Activated CD8-positive, alpha-beta memory T cell treated with anti-CD3 and anti-CD28 coated beads, Interleukin-2, amount 10 ng/mL, durations not matched to agents 7 days and 5 days (primary cell): ENCODE measurements at regions of chr2 and their contacts with region 1.

Region 1: DNA sequence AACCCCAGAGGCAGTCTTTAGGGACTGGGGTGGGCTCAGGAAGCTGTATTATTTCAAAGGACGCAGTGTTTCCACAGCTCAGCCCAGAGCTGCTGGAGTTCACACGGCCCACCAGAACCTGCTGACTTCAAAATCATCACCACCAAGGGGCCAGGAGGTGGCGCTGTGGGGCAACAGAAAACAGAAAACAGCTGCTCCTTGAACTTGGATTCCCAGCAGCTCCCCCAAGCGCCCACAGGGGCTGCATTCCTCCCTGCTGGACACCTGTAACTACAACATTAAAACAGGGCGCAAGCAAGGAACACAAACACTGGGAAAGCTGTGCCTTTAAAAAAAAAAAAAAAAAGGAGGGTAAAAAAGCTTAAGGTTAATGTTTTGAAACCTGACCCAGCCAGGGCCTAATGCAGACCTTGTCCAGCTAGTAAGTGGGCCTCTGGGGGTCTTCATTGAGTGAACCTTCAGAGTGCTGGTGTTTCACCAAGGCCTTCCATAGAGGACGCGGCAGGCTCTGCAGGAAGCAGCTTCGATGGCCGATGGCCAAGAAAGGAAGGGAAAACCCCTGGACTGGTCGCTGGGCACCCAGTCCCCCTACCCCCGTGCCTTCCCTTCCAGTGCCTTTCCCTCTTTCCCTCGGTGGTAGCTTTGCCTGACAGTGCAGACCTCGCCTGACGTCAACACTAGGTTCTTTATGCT is 25.9 kb downstream of the MLPH start:
- DNase-seq: peak; percentile 81
- ATAC-seq: peak; percentile 70
- H3K4me3 Mint-ChIP-seq: no peak overlapping the region
- H3K27ac Mint-ChIP-seq: no peak overlapping the region
- H3K4me1 Mint-ChIP-seq: no peaks in the 10 kb centered on the region
- H3K27me3 Mint-ChIP-seq: peaks cover 9% of the 10 kb centered on the region

Region 2: GRCh38 chr2:237421542-237422116 is 91.3 kb before region 1 on chr2:
- CTCF ChIA-PET with region 1: interaction called, 10 read pairs
- DNase-seq: peak; percentile 80
- ATAC-seq: peak; percentile 98
- H3K4me3 Mint-ChIP-seq: no peak overlapping the region
- H3K27ac Mint-ChIP-seq: no peak overlapping the region
- H3K4me1 Mint-ChIP-seq: peaks cover 5% of the 10 kb centered on the region
- H3K27me3 Mint-ChIP-seq: peaks cover 5% of the 10 kb centered on the region

Region 3: GRCh38 chr2:237558906-237559641 is 46.2 kb after region 1 on chr2:
- CTCF ChIA-PET with region 1: interaction called, 10 read pairs
- DNase-seq: no peak
- ATAC-seq: no peak
- H3K4me3 Mint-ChIP-seq: no peak overlapping the region
- H3K27ac Mint-ChIP-seq: no peak overlapping the region
- H3K4me1 Mint-ChIP-seq: peaks cover 13% of the 10 kb centered on the region
- H3K27me3 Mint-ChIP-seq: peaks cover 37% of the 10 kb centered on the region

Region 4: GRCh38 chr2:237581751-237582746 is 69.1 kb after region 1 on chr2:
- CTCF ChIA-PET with region 1: interaction called, 10 read pairs
- DNase-seq: peak; percentile 80
- ATAC-seq: peak; percentile 89
- H3K4me3 Mint-ChIP-seq: no peak overlapping the region
- H3K27ac Mint-ChIP-seq: peak overlapping the region; percentile 59
- H3K4me1 Mint-ChIP-seq: peaks cover 4% of the 10 kb centered on the region
- H3K27me3 Mint-ChIP-seq: peaks cover 5% of the 10 kb centered on the region

Region 5: DNA sequence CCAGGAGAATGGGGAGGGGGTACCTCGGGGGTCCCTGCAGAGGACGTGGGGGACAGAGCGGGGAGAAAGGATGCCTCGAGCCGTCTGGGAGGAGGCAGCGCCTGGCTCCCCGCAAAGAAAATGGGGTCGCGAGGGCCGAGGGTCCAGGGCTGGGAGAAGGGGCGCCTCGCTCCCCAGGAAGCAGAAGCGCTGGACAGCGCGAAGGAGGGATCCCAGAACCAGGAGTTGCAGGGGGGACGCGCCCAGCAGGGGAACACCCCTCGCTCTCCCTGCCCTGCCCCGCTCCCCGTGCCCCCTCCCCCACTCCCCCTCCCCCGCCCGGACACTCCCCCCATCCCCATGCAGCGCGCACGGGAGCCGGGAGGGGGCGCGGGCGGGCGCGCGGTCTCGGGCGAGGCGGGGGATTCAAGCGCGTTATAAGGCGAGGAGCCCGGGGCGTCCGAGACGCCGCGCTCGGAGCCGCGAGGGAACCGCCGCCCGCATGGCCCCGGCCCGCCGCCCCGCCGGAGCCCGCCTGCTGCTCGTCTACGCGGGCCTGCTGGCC is 645.7 kb after region 1 on chr2 and contains the start of gene ERFE:
- CTCF ChIA-PET with region 1: no interaction called
- DNase-seq: no peak
- ATAC-seq: peak; percentile 74
- H3K4me3 Mint-ChIP-seq: peak within 1 kb of the TSS; percentile 39
- H3K27ac Mint-ChIP-seq: no peak within 1 kb of the TSS
- H3K4me1 Mint-ChIP-seq: peaks cover 4% of the 10 kb centered on the region
- H3K27me3 Mint-ChIP-seq: peaks cover 45% of the 10 kb centered on the region
- total RNA-seq, gene ERFE: not detected